ENCODE measurements at regions of chr15 and their contacts with region 1.

Region 1: DNA sequence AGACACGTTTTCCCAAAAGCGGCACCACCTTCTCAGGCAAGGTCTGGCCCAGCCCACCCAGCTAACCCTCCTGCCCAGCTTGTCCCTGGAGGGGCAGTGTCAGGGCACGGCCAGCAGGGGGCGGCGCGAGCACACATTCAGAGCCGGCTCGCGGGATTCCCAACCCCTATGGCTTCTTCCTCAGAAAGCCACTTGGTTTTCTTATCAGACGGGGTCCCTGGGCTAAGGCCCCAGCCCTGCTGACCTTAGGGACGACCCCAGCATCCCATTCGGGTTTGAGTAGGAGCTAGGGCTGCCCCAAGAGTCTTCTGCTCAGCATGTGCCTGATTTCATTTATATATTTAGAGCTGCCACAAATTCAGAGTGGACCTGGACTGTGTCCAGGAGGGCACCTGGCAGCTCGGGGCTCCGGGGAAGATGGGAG is 14.5 kb downstream of the RLBP1 start:
- DNase-seq: peak; percentile 76
- ATAC-seq: peak; percentile 73
- H3K4me3 Mint-ChIP-seq: no peak overlapping the region
- H3K27ac Mint-ChIP-seq: no peak overlapping the region
- H3K4me1 Mint-ChIP-seq: peaks cover 36% of the 10 kb centered on the region
- H3K27me3 Mint-ChIP-seq: peaks cover 7% of the 10 kb centered on the region

Region 2: DNA sequence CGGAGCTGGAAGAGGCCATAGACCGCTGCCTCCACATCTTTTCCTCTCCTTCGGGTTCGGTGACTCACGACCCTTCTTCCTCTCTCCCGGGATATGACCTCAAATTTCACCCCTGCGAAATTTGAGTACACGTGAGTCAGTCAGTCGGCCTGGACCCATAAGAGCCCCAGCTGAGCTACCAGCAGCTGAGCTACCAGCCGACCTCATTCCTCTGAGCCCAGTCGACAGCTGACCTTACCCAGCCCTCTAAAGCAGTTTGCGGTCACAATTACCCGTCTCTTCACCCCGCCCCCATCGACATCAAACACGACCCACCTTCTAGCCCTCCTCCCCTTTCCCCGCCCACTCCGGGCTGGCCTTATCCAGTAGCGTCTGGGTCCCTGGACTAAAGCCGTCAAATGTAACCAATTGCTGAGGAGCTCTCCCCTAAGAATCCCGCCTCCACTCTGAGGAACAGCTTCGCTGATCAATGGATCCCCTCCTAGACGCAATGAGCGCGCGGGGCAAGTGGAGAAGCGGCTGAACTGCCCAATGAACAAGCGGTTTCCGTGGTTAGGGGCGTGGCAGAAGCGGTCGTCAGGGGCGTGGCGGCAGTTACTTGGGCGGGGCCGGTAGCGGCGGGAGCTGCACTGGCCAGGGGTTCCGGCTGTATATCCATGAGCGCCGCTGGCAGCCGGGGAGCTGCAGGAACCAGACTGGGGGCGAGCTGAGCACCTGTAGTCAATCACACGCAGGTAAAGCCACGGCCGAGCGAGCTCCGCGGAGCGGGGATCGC is 118.9 kb before region 1 on chr15 and contains the start of gene ABHD2:
- CTCF ChIA-PET with region 1: interaction called, 20 read pairs
- DNase-seq: peak; percentile 99
- ATAC-seq: peak; percentile 99
- H3K4me3 Mint-ChIP-seq: no peak within 1 kb of the TSS
- H3K27ac Mint-ChIP-seq: no peak within 1 kb of the TSS
- H3K4me1 Mint-ChIP-seq: peaks cover 33% of the 10 kb centered on the region
- H3K27me3 Mint-ChIP-seq: no peaks in the 10 kb centered on the region
- total RNA-seq, gene ABHD2: 53.3 to 58.1 TPM

Region 3: GRCh38 chr15:89221543-89221942 is 14.6 kb after region 1 on chr15 and contains the start of gene RLBP1:
- CTCF ChIA-PET with region 1: interaction called, 44 read pairs
- DNase-seq: no peak
- ATAC-seq: no peak
- H3K4me3 Mint-ChIP-seq: no peak within 1 kb of the TSS
- H3K27ac Mint-ChIP-seq: no peak within 1 kb of the TSS
- H3K4me1 Mint-ChIP-seq: no peaks in the 10 kb centered on the region
- H3K27me3 Mint-ChIP-seq: peaks cover 21% of the 10 kb centered on the region
- total RNA-seq, gene RLBP1: not detected

Region 4: DNA sequence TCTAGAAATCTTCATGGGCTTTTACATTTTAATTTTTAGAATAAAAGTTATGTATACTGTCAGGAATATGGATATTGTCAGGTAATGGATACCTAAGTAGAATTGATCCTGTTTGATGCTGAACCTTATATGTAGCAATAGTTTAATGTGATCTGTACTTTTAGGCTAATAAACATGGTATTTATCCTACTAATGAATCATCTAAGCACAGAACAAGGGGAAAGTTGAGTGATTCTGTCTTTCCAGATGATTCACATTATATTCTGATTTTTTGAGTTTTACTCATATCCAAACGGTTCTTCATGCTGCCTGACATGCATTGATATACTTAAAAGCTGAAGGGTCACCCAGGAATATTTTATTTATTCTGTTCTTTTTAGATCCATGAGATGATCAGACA is 71.4 kb after region 1 on chr15:
- CTCF ChIA-PET with region 1: interaction called, 16 read pairs
- DNase-seq: no peak
- ATAC-seq: no peak
- H3K4me3 Mint-ChIP-seq: no peak overlapping the region
- H3K27ac Mint-ChIP-seq: no peak overlapping the region
- H3K4me1 Mint-ChIP-seq: peaks cover 1% of the 10 kb centered on the region
- H3K27me3 Mint-ChIP-seq: no peaks in the 10 kb centered on the region

Region 5: DNA sequence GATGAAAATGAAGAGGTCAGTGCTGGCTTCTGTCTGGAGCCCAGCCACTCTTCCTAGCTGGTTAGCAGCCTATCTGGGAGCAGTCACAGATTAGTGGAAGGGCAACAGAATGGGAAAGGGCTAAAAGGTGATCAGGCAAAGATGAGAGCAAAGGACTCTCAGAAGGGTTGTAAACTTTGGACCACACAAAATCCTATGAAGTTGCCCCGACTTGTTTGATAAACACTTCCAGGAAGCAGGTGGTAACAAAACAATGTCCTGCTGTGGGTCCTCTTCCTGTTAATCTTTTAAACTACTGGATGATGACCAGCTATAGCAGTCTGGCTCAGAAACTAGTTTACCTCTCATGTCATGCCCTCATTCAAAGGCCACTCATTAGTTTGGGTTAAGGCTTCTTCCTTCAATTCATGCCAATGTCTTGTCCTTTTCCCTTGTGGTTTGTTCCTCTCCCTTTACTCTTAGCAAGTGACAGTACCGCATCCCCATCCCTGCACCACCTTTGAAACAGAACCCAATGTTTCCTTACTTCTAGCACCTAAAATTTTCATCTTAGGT is 108.5 kb after region 1 on chr15:
- CTCF ChIA-PET with region 1: interaction called, 10 read pairs
- DNase-seq: no peak
- ATAC-seq: no peak
- H3K4me3 Mint-ChIP-seq: no peak overlapping the region
- H3K27ac Mint-ChIP-seq: peak overlapping the region; percentile 77
- H3K4me1 Mint-ChIP-seq: peaks cover 26% of the 10 kb centered on the region
- H3K27me3 Mint-ChIP-seq: no peaks in the 10 kb centered on the region

Region 6: DNA sequence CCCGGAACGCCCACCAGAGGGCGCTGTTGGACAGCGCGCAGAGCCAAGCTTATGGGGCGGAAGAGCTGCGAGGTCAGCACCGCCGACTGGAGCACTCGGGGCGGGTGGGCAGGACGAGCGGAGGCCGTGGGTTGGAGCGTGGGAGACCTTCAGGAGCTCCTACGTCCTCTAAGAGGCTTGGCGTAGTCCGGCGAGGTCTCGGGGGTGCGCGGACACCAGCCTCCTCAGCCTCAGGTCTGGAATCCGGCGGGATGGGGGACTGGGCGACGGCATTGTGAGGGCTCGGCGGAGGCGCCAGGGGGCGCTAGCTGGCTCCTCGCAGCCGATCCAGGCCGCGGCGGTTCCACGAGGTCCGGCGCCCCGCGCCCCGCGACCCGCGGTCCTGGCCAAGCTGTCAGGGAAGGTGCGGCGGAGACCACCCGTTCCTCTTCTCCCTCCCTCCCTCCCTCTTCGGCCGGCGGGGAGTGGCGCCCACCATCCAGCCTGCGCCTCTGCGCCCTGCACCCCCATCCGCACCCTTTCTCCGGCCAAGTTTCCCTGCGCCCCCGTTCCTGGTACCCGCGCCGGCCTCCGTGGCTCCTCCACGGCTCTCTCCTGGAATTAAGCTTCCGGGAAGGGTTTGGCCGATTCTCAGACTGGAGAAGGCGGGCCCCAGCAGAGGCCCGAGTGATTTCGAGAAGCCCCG is 152.0 kb after region 1 on chr15:
- CTCF ChIA-PET with region 1: interaction called, 16 read pairs
- DNase-seq: peak; percentile 86
- ATAC-seq: peak; percentile 93
- H3K4me3 Mint-ChIP-seq: peak overlapping the region; percentile 73
- H3K27ac Mint-ChIP-seq: peak overlapping the region; percentile 54
- H3K4me1 Mint-ChIP-seq: peaks cover 7% of the 10 kb centered on the region
- H3K27me3 Mint-ChIP-seq: peaks cover 83% of the 10 kb centered on the region

Measured in activated CD8-positive, alpha-beta memory T cell treated with anti-CD3 and anti-CD28 coated beads, Interleukin-2, amount 10 ng/mL, durations not matched to agents 7 days and 5 days (primary cell).